Right ventricle myocardium inferior (tissue), 1 donor: ENCODE measurements at regions of chr3 and their contacts with region 1.

Region 1: DNA sequence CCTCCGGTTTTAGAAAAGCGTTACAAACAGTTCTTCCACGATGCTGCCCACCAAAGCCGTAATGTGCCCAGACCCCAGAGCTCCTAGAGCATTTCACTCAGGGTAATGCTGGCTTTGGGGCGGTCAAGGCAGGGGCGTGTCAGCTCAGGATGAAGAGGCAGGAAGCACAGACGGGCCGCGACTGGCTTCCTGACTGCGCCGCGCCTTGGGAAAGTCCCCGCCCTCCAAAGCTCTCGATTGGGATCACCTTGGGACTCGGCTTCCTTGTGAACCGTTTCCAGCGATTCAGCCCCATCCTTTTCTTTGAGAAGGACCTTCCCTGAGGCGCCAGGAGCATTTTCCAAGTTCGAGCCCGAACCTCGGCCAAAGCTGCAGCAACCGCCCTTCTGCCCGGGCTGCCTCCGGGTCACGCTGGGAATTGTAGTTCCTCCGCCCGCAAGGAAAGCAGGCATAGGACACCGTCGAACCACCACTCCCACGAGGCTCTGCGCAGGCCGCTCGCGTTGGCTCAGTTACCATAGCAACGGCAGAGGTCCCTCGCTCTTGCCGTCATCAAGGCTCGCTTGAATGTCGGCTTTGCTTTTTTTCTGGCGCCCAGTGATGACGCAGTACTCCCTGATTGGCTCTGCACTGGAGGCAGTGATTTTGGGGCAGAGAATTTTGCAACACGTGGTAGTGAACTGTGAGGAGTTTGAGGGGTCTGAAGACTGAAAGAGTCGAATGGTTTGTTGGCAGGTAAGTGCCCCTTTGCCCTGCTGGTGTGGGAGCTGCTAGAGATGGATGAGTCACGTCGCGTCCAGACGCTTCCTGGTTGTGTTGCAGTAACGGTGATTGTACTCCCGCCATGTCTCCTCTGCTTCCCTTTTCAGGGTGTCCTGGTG is at the starts of genes CCDC191 and QTRT2:
- DNase-seq: peak; percentile 98
- ATAC-seq: peak; percentile 100
- total RNA-seq, gene CCDC191: 0.78 TPM
- total RNA-seq, gene QTRT2: 4.3 TPM

Region 2: DNA sequence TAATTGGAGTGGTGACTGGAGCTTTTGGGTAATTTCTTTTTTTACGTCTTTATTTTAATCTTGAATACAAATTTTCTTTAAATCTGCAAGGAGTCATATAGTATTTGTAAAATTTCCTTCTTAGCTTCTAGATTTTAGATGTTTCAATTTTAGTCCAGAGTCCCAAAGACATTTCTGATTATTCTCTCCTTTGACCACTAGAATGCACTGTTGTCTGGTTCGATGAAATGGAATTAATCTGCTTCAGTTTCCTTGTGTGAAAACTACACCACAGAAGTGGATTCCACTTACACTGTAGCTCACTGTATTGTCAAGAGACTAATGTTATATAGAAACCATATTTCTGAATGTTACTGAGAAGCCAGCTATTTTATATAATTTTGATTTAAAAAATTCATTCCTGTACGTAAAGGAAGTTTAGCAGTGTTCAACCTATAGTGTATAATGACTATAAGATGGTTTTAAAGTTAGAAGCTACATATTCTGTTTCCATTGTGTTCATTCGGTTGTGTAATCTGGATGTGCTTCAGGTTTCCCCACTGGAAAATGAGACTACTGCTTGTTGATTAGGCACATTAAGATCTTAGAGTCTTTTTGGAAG is 211.6 kb before region 1 on chr3:
- intact Hi-C with region 1: loop called (anchors 10 kb)
- DNase-seq: no peak
- ATAC-seq: no peak

Region 3: DNA sequence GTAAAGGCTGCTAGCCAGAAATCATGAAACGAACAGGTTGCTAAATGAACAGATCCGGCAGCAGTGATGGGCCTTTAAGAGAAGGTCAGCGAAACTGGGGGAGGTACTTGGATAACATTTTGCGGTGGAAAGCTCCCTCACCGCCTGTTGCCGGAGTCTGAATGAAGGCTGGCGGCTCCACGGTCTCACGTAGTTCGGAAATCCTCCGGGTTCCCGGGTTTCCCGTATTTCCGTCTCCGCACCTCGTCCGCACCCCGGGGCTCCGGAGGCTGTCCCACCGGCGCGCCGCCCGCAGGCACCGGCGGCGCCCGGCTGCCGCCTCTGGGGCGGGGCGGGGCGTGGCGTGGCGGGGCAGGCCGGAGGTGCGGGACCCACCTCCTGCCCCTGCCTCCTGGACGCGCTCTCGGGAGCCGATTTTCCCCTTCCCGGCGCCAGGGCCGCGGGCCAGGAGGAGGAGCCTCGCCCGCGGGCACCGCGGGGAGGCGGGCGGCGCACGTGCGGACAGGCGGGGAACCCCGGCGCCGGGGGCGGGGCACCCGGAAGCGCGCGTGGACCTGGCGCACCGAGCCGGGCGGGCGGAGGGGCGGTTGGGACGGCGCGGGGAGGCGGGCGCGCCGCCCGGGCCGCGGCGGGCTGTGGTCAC is 108.9 kb before region 1 on chr3 and contains the start of gene ZDHHC23:
- intact Hi-C with region 1: loop called (anchors 5 kb)
- DNase-seq: peak; percentile 90
- ATAC-seq: peak; percentile 96
- total RNA-seq, gene ZDHHC23: 4.4 TPM

Region 4: DNA sequence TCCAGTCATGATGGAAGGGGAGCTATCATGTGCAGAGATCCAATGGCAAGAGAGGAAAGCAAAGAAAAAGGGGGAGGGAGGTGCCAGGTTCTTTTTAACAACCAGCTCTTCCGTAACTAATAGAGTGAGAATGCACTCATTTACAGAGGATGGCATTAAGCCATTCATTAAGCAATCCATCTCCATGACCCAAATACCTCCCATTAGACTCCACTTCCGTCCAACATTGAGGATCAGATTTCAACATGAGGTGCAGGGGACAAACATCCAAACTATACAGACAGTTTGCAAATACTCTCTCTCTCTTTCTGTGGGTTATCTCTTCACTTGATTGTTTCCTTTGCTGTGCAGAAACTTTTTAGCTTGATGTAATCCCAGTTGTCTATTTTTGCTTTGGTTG is 87.4 kb before region 1 on chr3:
- intact Hi-C with region 1: no loop called
- DNase-seq: no peak
- ATAC-seq: peak; percentile 71